PC-9 (cell line): ENCODE measurements at regions of chr16 and their contacts with region 1.

Region 1: GRCh38 chr16:66608241-66609138 is 4.0 kb downstream of the CMTM3 start:
- DNase-seq: peak; percentile 78 to 90
- H3K4me3 ChIP-seq: no peak overlapping the region
- H3K27ac ChIP-seq: no peak overlapping the region
- H3K4me1 ChIP-seq: peaks cover 14% of the 10 kb centered on the region
- H3K27me3 ChIP-seq: no peaks in the 10 kb centered on the region
- CTCF ChIP-seq: peak; percentile 92

Region 2: DNA sequence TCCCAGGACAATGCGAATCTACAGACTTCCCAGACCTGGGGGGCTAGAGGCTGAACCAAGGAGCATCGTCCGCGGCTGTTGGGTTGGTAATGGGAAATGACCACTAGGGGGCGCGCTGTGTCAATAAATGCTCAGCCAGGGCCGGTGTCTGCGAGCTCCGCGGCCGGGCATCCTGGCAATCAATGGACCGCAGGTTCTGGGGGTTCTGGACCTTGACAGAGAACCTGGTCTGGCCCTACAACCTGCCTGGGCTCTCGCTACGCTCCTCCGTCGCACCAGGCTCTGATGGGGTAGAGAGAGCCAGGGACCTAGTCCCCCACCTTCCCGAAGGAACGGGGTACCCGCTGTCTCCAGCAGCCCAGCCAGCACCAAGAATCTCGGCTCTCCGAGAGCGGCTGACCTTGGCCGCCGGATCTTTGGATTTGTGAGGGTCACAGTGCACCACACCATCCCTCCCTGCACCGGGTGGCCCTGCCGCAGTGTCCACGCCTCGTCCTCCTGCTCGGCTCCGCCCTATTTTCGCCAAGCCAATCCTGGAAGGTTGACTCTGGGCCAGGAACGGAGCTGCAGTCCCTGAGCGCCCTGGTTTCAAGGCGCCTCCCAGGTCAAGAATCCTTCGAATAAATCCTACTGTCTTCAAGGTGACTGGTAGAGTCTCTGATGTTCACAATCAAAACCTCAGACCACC is 201.8 kb before region 1 on chr16:
- CTCF ChIA-PET with region 1: interaction called, 4 read pairs
- POLR2A ChIA-PET with region 1: no interaction called
- intact Hi-C with region 1: loop called (anchors 2 kb)
- DNase-seq: peak; percentile 64 to 79
- H3K4me3 ChIP-seq: peak overlapping the region; percentile 63; the same call in 1 of the 2 replicates
- H3K27ac ChIP-seq: no peak overlapping the region
- H3K4me1 ChIP-seq: peaks cover 36% of the 10 kb centered on the region
- H3K27me3 ChIP-seq: no peaks in the 10 kb centered on the region
- CTCF ChIP-seq: peak; percentile 95

Region 3: GRCh38 chr16:66508261-66508913 is 100.1 kb before region 1 on chr16:
- CTCF ChIA-PET with region 1: no interaction called
- POLR2A ChIA-PET with region 1: no interaction called
- intact Hi-C with region 1: loop called (anchors 2 kb)
- DNase-seq: peak; percentile 80 to 99
- H3K4me3 ChIP-seq: peak overlapping the region; percentile 15; the same call in 1 of the 2 replicates
- H3K27ac ChIP-seq: peak overlapping the region; percentile 81
- H3K4me1 ChIP-seq: peaks cover 78% of the 10 kb centered on the region
- H3K27me3 ChIP-seq: no peaks in the 10 kb centered on the region
- CTCF ChIP-seq: no peak; the same call in 1 of the 2 replicates

Region 4: DNA sequence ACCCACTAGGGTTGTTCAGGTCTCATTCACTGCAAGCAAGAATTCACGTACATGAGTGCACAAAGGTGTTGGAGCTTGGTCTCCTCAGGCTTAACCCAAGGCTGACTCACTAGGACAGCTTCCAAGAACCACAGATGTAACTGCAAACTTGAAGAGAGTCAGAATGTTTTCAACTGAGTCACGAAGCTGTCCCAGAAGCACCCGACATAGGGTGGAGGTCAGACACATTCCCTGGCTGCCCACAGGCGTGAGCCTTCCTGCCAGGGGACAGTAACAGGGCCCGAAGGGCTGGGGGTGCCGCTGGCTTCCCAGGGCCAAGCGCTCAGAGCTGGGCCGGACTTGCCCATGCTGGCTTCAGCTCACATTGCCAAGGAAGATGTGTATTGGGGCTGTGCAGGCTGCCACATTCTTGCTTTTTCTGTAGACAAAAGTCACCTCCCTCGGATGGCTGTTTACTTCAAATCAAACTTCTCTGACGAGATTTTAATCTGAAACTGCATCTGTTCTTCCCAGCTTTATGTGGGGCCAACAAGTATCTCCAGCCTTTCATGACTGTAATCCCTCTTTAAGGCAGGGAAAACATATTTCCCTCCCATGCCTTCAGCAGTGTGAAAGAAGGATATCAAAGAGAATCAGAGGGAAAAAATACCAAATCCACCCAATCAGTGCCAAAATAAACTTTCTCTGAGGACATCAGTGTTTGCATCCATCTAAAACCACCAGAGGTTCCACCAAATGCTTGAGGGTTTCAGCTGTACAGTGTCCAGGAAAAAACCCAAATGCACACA is 10.3 kb after region 1 on chr16:
- CTCF ChIA-PET with region 1: interaction called, 15 read pairs
- POLR2A ChIA-PET with region 1: interaction called, 3 read pairs
- intact Hi-C with region 1: no loop called
- DNase-seq: peak; percentile 89 to 94
- H3K4me3 ChIP-seq: no peak overlapping the region
- H3K27ac ChIP-seq: peak overlapping the region; percentile 54
- H3K4me1 ChIP-seq: peaks cover 31% of the 10 kb centered on the region
- H3K27me3 ChIP-seq: no peaks in the 10 kb centered on the region
- CTCF ChIP-seq: no peak

Region 5: GRCh38 chr16:66690106-66690847 is 81.8 kb after region 1 on chr16:
- CTCF ChIA-PET with region 1: interaction called, 8 read pairs
- POLR2A ChIA-PET with region 1: no interaction called
- intact Hi-C with region 1: loop called (anchors 2 kb)
- DNase-seq: no peak
- H3K4me3 ChIP-seq: no peak overlapping the region
- H3K27ac ChIP-seq: no peak overlapping the region
- H3K4me1 ChIP-seq: peaks cover 37% of the 10 kb centered on the region
- H3K27me3 ChIP-seq: no peaks in the 10 kb centered on the region
- CTCF ChIP-seq: no peak

Region 6: GRCh38 chr16:66728117-66728787 is 119.8 kb after region 1 on chr16:
- CTCF ChIA-PET with region 1: interaction called, 4 read pairs
- POLR2A ChIA-PET with region 1: no interaction called
- intact Hi-C with region 1: loop called (anchors 2 kb)
- DNase-seq: peak in 1 of 2 experiments; percentile 48
- H3K4me3 ChIP-seq: no peak overlapping the region
- H3K27ac ChIP-seq: no peak overlapping the region
- H3K4me1 ChIP-seq: no peaks in the 10 kb centered on the region
- H3K27me3 ChIP-seq: no peaks in the 10 kb centered on the region
- CTCF ChIP-seq: peak; percentile 82

Region 7: GRCh38 chr16:66872943-66873684 is 264.6 kb after region 1 on chr16:
- CTCF ChIA-PET with region 1: interaction called, 5 read pairs
- POLR2A ChIA-PET with region 1: no interaction called
- intact Hi-C with region 1: loop called (anchors 2 kb)
- DNase-seq: peak; percentile 90 to 93
- H3K4me3 ChIP-seq: peak overlapping the region; percentile 64
- H3K27ac ChIP-seq: peak overlapping the region; percentile 42
- H3K4me1 ChIP-seq: peaks cover 7% of the 10 kb centered on the region
- H3K27me3 ChIP-seq: no peaks in the 10 kb centered on the region
- CTCF ChIP-seq: peak; percentile 91